Psoas muscle (tissue), 8 donors: ENCODE measurements at regions of chr1 and their contacts with region 1.

Region 1: DNA sequence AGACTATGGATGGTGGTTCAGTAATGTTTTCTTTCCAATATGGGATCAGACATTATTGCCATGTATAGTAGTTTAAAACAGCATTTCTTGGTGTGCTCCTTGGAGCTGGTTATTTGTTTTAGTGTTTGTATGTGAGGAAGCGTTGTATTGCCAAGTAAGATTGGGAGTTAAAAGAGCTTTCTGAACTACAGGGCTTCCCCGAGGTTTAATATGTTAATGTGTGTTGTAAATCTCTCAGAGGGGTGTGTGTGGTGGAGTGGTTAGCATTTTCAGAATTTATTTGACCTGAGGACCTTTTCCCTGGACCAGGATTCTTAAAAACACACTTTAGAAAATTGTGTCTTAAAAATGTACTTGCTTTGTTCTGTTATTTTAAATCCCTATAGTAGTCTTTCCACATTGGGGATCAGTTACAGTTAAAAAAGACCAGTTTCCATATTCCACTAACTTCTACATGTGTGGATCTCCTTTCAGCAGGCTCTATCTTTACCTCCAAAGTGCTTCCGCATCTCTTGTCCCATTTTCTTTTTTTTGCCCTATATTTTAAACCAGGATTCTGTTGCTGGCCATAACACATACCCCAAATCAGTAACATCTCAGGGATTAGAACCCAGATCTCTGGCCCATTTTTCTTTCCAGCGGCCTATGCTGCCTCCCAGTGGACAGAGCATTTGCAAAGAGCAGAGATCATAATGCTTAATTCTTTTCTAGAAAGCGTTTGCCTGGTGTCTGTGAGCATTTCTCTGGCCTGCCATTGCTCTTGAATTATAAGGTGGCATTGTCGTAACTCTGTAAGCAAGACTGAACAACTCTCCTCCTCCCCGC is 58.6 kb downstream of the PBX1 start:
- DNase-seq: no peak
- ATAC-seq: no peak
- H3K4me3 ChIP-seq: no peak overlapping the region
- H3K27ac ChIP-seq: no peak overlapping the region
- H3K4me1 ChIP-seq: peaks cover 65% of the 10 kb centered on the region
- H3K27me3 ChIP-seq: no peaks in the 10 kb centered on the region
- CTCF ChIP-seq: peak; percentile 42

Region 2: DNA sequence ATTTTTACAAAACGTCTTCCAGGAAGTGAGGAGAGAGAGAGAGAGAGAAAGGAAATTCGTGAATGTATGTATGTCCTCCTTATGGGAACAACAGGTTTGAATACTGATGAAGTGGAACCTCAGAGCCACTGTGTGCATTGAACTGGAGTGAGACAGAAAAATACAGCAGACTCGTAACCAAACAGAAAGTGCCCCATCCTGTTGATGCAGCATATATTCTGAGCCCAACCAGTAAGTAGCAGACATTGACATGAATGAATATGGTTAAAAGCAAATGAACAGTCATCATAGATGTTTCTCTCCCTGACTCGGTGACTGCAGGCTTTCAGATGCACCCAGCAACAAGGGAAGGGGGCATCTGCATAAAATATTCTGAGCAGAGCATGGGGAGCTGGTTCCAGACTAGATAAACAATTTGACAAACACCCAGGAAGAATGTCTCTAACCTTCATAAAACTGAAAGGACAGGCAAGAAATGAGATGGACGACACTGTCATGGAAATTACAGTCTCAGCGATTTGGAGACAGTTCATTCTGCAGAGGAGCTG is 529.6 kb before region 1 on chr1:
- intact Hi-C with region 1: loop called in 1 of 2 experiments (anchors 5 kb)
- DNase-seq: no peak
- ATAC-seq: no peak
- H3K4me3 ChIP-seq: no peak overlapping the region
- H3K27ac ChIP-seq: no peak overlapping the region
- H3K4me1 ChIP-seq: no peaks in the 10 kb centered on the region
- H3K27me3 ChIP-seq: no peaks in the 10 kb centered on the region
- CTCF ChIP-seq: no peak

Region 3: DNA sequence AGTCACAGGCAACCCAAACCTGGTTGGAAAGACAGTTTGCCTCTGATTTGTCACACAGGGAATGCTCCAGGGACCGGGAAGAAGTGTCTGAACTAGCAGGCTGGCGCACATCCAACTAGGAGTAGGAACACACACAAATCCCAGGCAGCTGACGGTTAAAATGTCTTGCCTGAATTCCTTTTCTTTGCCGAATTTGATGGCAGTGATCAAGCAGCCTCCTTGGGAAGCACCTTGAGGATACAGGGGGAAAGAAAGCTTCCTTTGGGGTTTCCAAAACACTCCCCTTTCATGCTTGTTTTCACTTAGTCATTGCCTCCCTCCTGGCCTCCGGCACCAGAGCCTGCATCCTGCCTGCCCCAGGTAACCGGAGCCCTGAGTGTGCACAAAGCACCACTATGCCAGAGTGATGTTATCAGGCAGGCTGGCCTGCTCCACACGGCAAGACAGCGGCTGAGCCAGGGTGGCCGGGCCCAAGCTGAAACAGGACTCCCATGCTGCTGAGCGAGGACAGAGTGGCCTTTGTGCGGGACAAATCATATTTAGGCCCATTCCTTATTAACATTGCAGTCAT is 545.2 kb after region 1 on chr1:
- intact Hi-C with region 1: no loop called
- DNase-seq: peak in 1 of 2 donors; percentile 57
- ATAC-seq: peak; percentile 70 to 90 (median 82)
- H3K4me3 ChIP-seq: no peak overlapping the region
- H3K27ac ChIP-seq: no peak overlapping the region
- H3K4me1 ChIP-seq: no peaks in the 10 kb centered on the region
- H3K27me3 ChIP-seq: no peaks in the 10 kb centered on the region
- CTCF ChIP-seq: no peak